A673 (cell line): ENCODE measurements at regions of chr15 and their contacts with region 1.

Region 1: DNA sequence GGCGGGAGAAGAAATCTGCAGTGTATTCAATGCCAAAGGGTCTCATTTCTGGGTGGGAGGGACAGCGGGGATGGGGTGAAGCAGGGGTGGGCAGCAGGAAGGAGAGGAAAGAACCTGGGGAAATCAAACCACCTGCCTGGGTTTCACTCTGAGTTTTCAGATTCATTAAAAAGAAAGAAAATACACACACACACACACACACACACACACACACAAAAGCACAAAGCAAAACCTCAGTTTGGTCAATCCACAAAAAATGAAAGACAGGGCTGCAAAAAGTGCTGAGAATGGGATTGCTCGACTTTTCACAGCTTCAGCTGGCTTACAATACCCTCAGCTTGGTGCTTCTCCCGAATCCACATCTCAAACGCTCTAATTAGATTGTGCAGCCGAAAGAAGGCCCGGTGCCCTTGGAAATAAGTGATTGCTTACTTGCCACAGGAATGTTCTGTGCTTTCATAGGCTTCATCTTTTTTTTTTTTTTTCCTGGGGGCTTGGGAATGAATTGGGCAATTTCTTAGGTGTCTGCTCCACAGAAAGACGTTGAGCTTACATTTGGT is 370.5 kb downstream of the RORA start:
- DNase-seq: no peak
- H3K4me3 ChIP-seq: no peak overlapping the region
- H3K27ac ChIP-seq: no peak overlapping the region
- H3K4me1 ChIP-seq: no peaks in the 10 kb centered on the region
- H3K27me3 ChIP-seq: no peaks in the 10 kb centered on the region
- CTCF ChIP-seq: no peak

Region 2: DNA sequence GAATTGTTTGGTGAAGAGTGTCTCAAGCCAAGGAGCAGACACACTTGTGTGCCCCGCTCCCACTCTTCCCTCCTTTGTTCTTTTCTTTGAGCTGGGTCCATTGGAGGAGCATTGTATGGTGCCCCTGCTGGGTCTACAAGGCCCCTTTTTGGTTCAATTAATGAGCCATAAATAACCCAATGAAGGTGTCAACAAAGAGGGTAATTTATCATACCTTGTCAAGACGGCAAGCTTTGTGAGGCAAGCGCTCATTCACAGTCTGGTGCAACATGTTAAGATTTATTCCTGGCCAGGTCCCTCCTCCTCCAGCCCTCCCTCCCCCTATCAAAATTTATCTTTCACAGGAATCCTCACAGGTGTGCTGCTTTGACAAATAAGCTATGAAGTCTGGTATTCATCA is 70.4 kb after region 1 on chr15:
- CTCF ChIA-PET with region 1: no interaction called
- POLR2A ChIA-PET with region 1: no interaction called
- intact Hi-C with region 1: no loop called
- DNase-seq: peak; percentile 18
- H3K4me3 ChIP-seq: no peak overlapping the region
- H3K27ac ChIP-seq: no peak overlapping the region
- H3K4me1 ChIP-seq: peaks cover 31% of the 10 kb centered on the region
- H3K27me3 ChIP-seq: no peaks in the 10 kb centered on the region
- CTCF ChIP-seq: no peak

Region 3: DNA sequence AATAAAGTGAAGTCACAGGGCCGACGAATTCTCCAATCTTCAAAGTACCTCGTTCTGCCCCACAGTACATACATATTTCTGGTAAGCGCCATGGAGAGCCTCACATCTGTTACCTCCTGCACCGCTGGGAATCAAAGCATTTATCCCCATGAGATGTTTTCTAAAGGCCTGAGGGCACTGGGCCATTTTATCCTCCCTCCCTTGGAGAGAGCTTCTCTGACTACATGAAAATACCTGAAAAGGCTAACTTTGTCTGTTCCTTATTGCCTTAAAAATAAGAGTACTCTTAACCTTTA is 222.4 kb after region 1 on chr15:
- CTCF ChIA-PET with region 1: no interaction called
- POLR2A ChIA-PET with region 1: interaction called, 24 read pairs
- intact Hi-C with region 1: no loop called
- DNase-seq: no peak
- H3K4me3 ChIP-seq: no peak overlapping the region
- H3K27ac ChIP-seq: no peak overlapping the region
- H3K4me1 ChIP-seq: peaks cover 12% of the 10 kb centered on the region
- H3K27me3 ChIP-seq: no peaks in the 10 kb centered on the region
- CTCF ChIP-seq: no peak